ENCODE measurements at regions of chr17 and their contacts with region 1.

Region 1: GRCh38 chr17:49707608-49708514 is at the start of gene SLC35B1:
- DNase-seq: peak; percentile 99
- H3K4me3 ChIP-seq: peak within 1 kb of the TSS; percentile 75 to 89
- H3K27ac ChIP-seq: peak within 1 kb of the TSS; percentile 80 to 90
- H3K4me1 ChIP-seq: peaks cover 0 to 32% (median 18%) of the 10 kb centered on the region in 4 donors
- H3K27me3 ChIP-seq: no peaks in the 10 kb centered on the region
- CTCF ChIP-seq: peak; percentile 51 to 60

Region 2: DNA sequence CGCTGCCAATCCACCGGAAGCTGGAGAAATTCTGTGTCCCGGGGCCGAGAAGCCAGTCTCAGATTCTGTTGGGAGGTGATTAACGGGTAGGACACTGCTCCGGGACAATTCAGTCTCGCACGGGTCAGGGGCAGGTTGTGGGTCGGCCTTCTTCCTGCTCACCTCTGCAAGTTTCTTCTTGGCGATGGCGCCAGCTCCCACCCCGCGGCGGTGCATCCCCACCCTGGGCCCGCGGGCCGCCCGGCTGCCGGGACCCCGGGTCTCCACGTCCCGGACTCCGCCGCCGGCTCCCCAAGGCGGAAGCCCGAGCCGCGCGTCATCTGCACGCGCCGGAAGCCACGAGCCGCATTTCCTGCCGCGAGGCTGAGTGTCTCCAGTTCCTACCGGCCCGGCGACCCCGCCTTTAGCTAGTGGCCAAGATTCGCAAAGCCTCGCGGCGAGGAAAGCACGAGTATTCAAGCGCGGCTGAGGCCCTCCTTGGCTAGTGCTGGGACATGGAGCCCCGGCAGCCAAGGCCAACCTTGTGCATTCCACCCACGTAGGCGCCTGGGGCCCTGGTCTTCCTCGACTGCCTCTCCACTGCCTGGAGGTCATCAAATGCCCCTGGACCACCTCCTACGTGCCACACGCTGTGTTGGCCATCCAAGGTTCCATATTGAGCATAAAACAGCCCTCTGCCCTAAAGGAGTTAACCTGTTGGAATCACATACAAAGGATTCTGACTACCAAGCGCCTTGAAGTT is 763.2 kb before region 1 on chr17 and contains the start of gene SNF8:
- intact Hi-C with region 1: no loop called
- DNase-seq: peak; percentile 84 to 92
- H3K4me3 ChIP-seq: peak within 1 kb of the TSS; percentile 84 to 92
- H3K27ac ChIP-seq: peak within 1 kb of the TSS; percentile 87 to 92
- H3K4me1 ChIP-seq: peaks cover 0 to 25% (median 14%) of the 10 kb centered on the region in 4 donors
- H3K27me3 ChIP-seq: no peaks in the 10 kb centered on the region
- CTCF ChIP-seq: no peak

Region 3: GRCh38 chr17:48970224-48970623 is 737.6 kb before region 1 on chr17:
- intact Hi-C with region 1: no loop called
- DNase-seq: no peak
- H3K4me3 ChIP-seq: no peak overlapping the region
- H3K27ac ChIP-seq: no peak overlapping the region
- H3K4me1 ChIP-seq: peaks cover 0 to 10% (median 6%) of the 10 kb centered on the region in 4 donors
- H3K27me3 ChIP-seq: peaks cover 0 to 47% of the 10 kb centered on the region in 2 donors
- CTCF ChIP-seq: no peak

Region 4: GRCh38 chr17:49508061-49508865 is 199.6 kb before region 1 on chr17:
- intact Hi-C with region 1: loop called (anchors 10 kb)
- DNase-seq: no peak
- H3K4me3 ChIP-seq: no peak overlapping the region
- H3K27ac ChIP-seq: no peak overlapping the region
- H3K4me1 ChIP-seq: peaks cover 0 to 23% (median 0%) of the 10 kb centered on the region in 4 donors
- H3K27me3 ChIP-seq: peaks cover 0 to 34% of the 10 kb centered on the region in 2 donors
- CTCF ChIP-seq: no peak

Region 5: GRCh38 chr17:49779739-49780231 is 71.9 kb after region 1 on chr17:
- intact Hi-C with region 1: loop called (anchors 5 kb)
- DNase-seq: peak in 1 of 2 donors; percentile 49
- H3K4me3 ChIP-seq: no peak overlapping the region
- H3K27ac ChIP-seq: peak overlapping the region; percentile 77 to 78
- H3K4me1 ChIP-seq: peaks cover 0 to 83% (median 66%) of the 10 kb centered on the region in 4 donors
- H3K27me3 ChIP-seq: no peaks in the 10 kb centered on the region
- CTCF ChIP-seq: peak; percentile 56 to 62

Region 6: DNA sequence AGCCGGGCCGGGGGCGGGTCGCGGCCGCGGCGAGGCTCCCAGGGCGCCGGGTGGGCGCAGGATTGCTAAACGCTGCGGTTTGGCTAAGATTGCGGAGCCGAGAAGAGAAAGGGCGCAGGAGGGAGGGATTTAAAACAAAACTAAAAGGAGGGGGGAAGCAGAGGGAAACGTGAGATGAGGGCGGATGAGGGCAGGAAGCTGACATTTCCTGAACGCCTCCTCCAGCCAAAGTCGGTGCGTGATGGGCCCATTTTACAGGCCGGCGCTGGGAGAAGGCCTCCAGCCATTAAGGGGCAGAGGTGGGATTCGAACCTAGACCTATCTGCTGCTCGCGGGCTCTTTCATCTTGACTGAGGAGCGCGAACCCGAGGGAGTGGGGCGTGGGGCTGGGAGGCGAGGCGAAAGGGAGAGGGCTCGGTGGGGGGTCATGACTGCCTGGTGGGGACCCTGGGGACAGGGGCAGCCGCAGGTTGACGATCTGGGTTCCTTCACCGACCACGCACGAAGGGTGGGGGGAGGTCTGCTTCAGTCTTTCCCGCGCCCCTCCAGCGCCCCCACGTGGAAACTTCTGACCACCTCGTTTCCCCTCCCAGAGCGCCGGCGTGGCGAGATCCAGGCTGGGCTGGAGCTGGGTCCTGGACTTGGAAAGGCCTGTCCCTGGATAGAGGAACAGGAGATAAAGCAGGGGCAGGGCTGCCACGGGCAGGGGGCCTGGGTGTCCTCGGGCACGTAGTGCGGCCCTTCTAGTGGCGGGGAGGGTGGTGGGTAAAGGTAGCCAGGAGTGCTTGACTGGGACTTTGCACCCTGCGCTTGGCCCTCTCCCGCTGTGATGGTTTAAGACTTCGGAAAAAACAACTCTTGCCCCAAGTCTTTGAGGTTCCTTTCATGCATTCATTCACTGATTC is 143.8 kb after region 1 on chr17:
- intact Hi-C with region 1: loop called (anchors 5 kb)
- DNase-seq: peak; percentile 71 to 87
- H3K4me3 ChIP-seq: peak overlapping the region; percentile 55 to 64
- H3K27ac ChIP-seq: peak overlapping the region; percentile 51 to 60
- H3K4me1 ChIP-seq: peaks cover 0 to 22% (median 12%) of the 10 kb centered on the region in 4 donors
- H3K27me3 ChIP-seq: no peaks in the 10 kb centered on the region
- CTCF ChIP-seq: peak; percentile 76 to 78

Measured in tibial artery (tissue), 4 donors.